PC-9 (cell line): ENCODE measurements at regions of chr18 and their contacts with region 1.

Region 1: GRCh38 chr18:46281185-46282176 is 177.3 kb downstream of the HAUS1 start:
- DNase-seq: peak; percentile 70 to 73
- H3K4me3 ChIP-seq: no peak overlapping the region
- H3K27ac ChIP-seq: no peak overlapping the region
- H3K4me1 ChIP-seq: peaks cover 33% of the 10 kb centered on the region
- H3K27me3 ChIP-seq: no peaks in the 10 kb centered on the region
- CTCF ChIP-seq: peak; percentile 94

Region 2: DNA sequence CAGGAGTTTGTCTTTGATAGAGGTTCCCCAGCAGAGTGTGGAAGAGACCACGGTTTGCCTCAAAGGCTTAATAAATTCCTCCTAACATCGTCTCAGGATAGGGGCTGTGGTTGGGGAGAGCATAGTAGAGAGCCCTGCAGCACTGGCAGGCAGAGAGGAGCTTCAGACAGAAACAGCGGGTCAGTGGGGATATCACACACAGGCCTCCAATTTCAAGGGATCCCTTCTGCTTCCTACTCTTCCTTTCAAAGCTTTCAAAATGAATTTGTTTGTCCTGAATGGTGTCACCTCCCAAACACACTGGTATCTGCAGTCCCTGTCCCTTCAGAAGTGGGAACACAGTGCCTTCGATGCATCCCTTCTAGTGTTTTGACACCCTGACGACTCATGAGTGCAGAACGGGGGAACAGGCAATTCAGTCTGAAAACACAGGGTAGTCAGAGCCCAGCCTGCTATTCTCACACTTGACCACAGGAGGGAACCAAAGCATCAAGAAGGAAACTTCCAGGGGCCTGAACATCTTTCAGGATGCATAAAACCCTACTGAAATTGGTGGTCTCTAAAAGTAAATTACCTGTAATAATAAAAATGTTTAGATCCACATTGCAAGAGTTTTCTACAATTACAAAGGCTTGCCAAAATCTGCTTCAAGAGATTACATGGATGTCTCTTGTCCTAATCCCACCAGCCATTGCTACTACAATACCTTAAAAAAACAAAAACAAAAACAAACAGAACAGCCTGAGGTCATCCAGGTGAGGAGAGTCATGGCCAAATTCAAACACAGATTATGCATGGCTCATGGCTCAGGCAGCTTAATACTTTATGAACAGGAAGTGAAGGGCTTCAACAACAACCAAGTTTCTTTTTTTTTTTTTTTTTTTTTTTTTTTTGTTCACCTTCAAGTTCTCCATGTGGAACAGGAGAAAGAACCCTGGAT is 616.4 kb before region 1 on chr18:
- CTCF ChIA-PET with region 1: no interaction called
- POLR2A ChIA-PET with region 1: interaction called, 18 read pairs
- intact Hi-C with region 1: no loop called
- DNase-seq: peak; percentile 23 to 73
- H3K4me3 ChIP-seq: no peak overlapping the region
- H3K27ac ChIP-seq: no peak overlapping the region
- H3K4me1 ChIP-seq: peaks cover 9% of the 10 kb centered on the region
- H3K27me3 ChIP-seq: no peaks in the 10 kb centered on the region; the same call in 1 of the 2 replicates
- CTCF ChIP-seq: peak; percentile 96

Region 3: DNA sequence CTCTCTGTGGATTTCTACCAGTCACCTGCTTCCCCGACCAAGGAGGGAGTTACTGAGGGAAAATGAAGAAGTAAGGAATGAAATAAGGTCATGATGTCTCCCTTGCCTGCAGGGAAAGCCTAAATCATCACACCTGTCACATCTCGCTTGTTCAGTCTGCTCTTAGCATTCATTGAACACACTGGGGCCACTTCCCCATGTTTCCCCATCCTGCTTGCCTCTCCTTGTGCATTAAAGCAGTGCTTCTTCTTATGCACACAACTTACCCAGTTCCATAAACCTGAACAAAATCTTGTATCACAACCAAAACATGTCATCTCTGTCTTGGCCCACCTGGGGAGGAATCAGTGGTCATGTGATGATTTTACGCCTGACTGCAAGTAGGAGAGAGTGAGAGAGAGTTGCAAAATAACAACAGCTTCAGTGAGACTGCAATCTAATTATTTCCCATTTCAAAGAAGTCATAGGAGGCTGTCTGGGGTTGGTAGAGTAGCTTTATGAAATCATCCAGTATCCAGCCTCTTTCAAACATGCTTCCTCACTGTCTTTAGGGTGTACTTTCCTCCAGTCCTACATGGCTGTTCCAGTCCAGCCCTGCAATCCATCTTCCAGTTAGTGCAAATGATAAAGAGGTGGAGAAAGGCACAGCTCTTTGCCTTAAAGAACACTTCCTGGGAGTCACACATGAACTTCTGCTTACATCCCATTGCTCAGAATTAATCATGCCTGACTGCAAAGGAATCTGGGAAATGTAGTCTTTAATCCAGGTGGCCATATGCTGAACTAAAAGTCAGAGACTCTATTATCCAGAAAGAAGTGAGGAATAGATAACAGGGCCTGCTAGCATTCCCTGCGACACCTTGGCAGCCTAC is 42.8 kb after region 1 on chr18:
- CTCF ChIA-PET with region 1: interaction called, 3 read pairs
- POLR2A ChIA-PET with region 1: no interaction called
- intact Hi-C with region 1: loop called (anchors 5 kb)
- DNase-seq: peak in 1 of 2 experiments; percentile 72
- H3K4me3 ChIP-seq: peak overlapping the region; percentile 36; the same call in 1 of the 2 replicates
- H3K27ac ChIP-seq: peak overlapping the region; percentile 100
- H3K4me1 ChIP-seq: peaks cover 58% of the 10 kb centered on the region
- H3K27me3 ChIP-seq: no peaks in the 10 kb centered on the region
- CTCF ChIP-seq: no peak

Region 4: GRCh38 chr18:46481048-46481846 is 199.8 kb after region 1 on chr18:
- CTCF ChIA-PET with region 1: no interaction called
- POLR2A ChIA-PET with region 1: no interaction called
- intact Hi-C with region 1: loop called (anchors 2 kb)
- DNase-seq: peak in 1 of 2 experiments; percentile 33
- H3K4me3 ChIP-seq: no peak overlapping the region
- H3K27ac ChIP-seq: no peak overlapping the region
- H3K4me1 ChIP-seq: peaks cover 19% of the 10 kb centered on the region
- H3K27me3 ChIP-seq: no peaks in the 10 kb centered on the region
- CTCF ChIP-seq: peak; percentile 84

Region 5: GRCh38 chr18:46660955-46661749 is 379.7 kb after region 1 on chr18:
- CTCF ChIA-PET with region 1: interaction called, 7 read pairs
- POLR2A ChIA-PET with region 1: no interaction called
- intact Hi-C with region 1: loop called (anchors 1 kb)
- DNase-seq: no peak
- H3K4me3 ChIP-seq: no peak overlapping the region
- H3K27ac ChIP-seq: no peak overlapping the region
- H3K4me1 ChIP-seq: no peaks in the 10 kb centered on the region
- H3K27me3 ChIP-seq: peaks cover 52% of the 10 kb centered on the region
- CTCF ChIP-seq: no peak